ENCODE measurements at regions of chrX and their contacts with region 1.

Region 1: DNA sequence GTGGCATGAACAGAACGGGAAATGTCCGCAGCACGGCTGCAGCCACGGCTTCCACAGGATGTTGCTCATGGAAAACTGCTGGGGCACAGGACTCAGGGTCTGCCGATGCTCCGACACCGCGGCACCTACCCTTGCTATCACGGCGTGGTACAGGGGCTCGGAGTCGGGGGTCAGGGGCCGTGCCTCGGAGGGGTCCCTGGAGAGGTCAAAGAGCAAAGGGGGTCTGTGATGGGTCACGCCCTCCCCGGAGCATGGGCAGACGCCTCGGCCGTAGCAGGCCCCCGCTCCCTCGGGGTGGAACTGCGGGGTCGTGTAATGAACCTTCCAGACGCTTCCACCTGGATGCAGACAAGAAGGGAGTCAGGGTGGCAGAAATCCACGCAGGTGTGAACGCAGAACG is 21.8 kb downstream of the ARSD start:
- DNase-seq: no peak
- H3K4me3 ChIP-seq: no peak overlapping the region
- H3K27ac ChIP-seq: no peak overlapping the region
- H3K4me1 ChIP-seq: no peaks in the 10 kb centered on the region
- H3K27me3 ChIP-seq: no peaks in the 10 kb centered on the region
- CTCF ChIP-seq: no peak

Region 2: DNA sequence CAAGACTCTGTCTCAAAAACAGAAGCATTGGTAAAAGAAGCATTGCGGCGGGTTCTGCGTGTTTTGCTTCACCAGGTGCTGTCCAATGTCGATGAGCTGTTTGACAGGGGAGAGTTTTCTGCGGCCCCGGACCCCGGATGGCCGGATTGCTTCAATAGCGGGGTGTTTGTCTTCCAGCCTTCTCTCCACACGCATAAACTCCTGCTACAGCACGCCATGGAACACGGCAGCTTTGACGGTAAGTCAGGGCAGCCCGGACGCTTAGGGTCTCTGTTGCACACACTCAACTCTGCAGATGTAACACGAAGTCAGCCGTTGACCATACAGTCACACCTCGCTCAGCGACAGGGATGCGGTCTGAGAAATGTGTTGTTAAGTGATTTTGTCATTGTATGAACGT is 52.4 kb before region 1 on chrX:
- CTCF ChIA-PET with region 1: no interaction called
- dilution Hi-C with region 1: loop called (anchors 5 kb)
- in situ Hi-C with region 1: no loop called
- intact Hi-C with region 1: no loop called
- DNase-seq: no peak
- H3K4me3 ChIP-seq: no peak overlapping the region
- H3K27ac ChIP-seq: no peak overlapping the region
- H3K4me1 ChIP-seq: no peaks in the 10 kb centered on the region
- H3K27me3 ChIP-seq: no peaks in the 10 kb centered on the region
- CTCF ChIP-seq: no peak

Region 3: DNA sequence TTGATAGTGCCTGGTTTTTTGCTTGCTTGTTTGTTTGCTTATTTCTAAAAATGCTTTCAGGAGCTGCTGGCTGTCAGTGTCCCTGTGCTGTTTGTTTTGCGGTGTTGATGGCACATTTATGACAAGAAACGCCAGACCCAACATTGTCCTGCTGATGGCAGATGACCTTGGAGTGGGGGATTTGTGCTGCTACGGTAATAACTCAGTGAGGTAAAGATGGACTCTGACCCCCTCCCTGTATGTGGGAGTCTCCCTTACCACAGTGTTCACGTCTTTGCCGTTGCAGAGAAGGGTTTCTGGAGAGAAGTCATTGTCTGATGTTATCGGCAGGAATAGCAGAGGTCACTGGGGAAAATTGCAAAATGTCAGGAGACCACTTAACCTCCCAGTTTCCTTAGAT is 99.2 kb after region 1 on chrX and contains the start of gene ARSH:
- CTCF ChIA-PET with region 1: no interaction called
- dilution Hi-C with region 1: loop called (anchors 5 kb)
- in situ Hi-C with region 1: no loop called
- intact Hi-C with region 1: no loop called
- DNase-seq: no peak
- H3K4me3 ChIP-seq: no peak within 1 kb of the TSS
- H3K27ac ChIP-seq: no peak within 1 kb of the TSS
- H3K4me1 ChIP-seq: no peaks in the 10 kb centered on the region
- H3K27me3 ChIP-seq: no peaks in the 10 kb centered on the region
- CTCF ChIP-seq: no peak
- total RNA-seq, gene ARSH: not detected